ENCODE measurements at regions of chr17 and their contacts with region 1.

Region 1: DNA sequence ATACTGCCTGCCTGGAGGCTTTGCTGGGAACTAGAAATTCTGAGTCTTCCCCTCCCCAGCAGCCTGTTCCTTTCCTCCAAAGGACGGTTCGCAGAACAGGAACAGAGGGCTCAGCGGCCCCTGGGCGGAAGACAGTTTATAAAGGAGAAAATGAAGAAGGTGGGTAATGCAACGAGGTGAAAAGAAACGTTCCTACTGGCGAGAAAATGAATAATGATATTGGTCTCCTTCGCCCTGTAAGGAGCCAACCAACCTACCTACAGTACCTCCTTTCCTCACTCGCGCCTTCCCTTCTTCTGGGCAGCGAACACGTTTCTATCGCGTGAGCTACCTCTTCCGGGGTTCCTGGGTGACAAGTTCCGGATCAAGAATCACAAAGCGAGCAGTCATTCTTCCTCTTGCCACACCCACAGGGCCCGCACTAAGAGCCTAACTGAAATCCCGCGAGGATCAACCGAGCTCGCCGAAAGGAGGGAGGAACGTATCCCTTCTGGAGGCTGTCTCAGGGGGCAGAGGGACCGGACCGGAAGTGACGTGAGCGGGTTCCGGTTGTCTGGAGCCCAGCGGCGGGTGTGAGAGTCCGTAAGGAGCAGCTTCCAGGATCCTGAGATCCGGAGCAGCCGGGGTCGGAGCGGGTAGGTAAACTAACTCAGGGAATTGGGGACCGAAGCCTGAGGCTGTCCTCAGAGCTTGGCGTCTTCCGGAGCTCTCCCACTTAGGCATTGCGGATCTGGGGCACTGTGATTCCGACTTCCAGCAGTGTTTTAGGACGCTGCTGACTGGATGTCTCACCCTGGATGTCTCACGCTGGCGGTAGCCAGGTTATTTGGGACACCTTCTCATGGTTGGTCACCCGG is at the starts of genes PTRH2 and VMP1:
- DNase-seq: peak; percentile 92
- H3K4me3 Mint-ChIP-seq: peak within 1 kb of the TSS; percentile 98
- H3K27ac Mint-ChIP-seq: peak within 1 kb of the TSS; percentile 96
- H3K4me1 Mint-ChIP-seq: peaks cover 50% of the 10 kb centered on the region
- H3K27me3 Mint-ChIP-seq: no peaks in the 10 kb centered on the region
- total RNA-seq, gene PTRH2: 49.7 and 51.1 TPM in 2 replicates
- total RNA-seq, gene VMP1: 357 and 374 TPM in 2 replicates

Region 2: GRCh38 chr17:59155439-59156182 is 551.7 kb before region 1 on chr17 and contains the start of gene PRR11:
- intact Hi-C with region 1: loop called (anchors 5 kb)
- DNase-seq: peak; percentile 94
- H3K4me3 Mint-ChIP-seq: no peak within 1 kb of the TSS
- H3K27ac Mint-ChIP-seq: no peak within 1 kb of the TSS
- H3K4me1 Mint-ChIP-seq: peaks cover 63% of the 10 kb centered on the region
- H3K27me3 Mint-ChIP-seq: no peaks in the 10 kb centered on the region
- total RNA-seq, gene PRR11: 29.4 and 32.7 TPM in 2 replicates

Region 3: GRCh38 chr17:59565171-59565969 is 142.0 kb before region 1 on chr17 and contains the start of gene DHX40:
- intact Hi-C with region 1: loop called (anchors 1 kb)
- DNase-seq: peak; percentile 90
- H3K4me3 Mint-ChIP-seq: peak within 1 kb of the TSS; percentile 100
- H3K27ac Mint-ChIP-seq: peak within 1 kb of the TSS; percentile 100
- H3K4me1 Mint-ChIP-seq: peaks cover 24% of the 10 kb centered on the region
- H3K27me3 Mint-ChIP-seq: peaks cover 7% of the 10 kb centered on the region
- total RNA-seq, gene DHX40: 16.8 and 17.1 TPM in 2 replicates

Region 4: GRCh38 chr17:59753522-59754467 is 46.5 kb after region 1 on chr17:
- intact Hi-C with region 1: loop called (anchors 2 kb)
- DNase-seq: peak; percentile 26
- H3K4me3 Mint-ChIP-seq: peak overlapping the region; percentile 80
- H3K27ac Mint-ChIP-seq: peak overlapping the region; percentile 93
- H3K4me1 Mint-ChIP-seq: peaks cover 64% of the 10 kb centered on the region
- H3K27me3 Mint-ChIP-seq: no peaks in the 10 kb centered on the region

Region 5: GRCh38 chr17:59892924-59893676 is 185.8 kb after region 1 on chr17 and contains the starts of genes RPS6KB1 and TUBD1:
- intact Hi-C with region 1: loop called (anchors 1 kb)
- DNase-seq: peak; percentile 98
- H3K4me3 Mint-ChIP-seq: peak within 1 kb of the TSS; percentile 100
- H3K27ac Mint-ChIP-seq: peak within 1 kb of the TSS; percentile 99
- H3K4me1 Mint-ChIP-seq: peaks cover 58% of the 10 kb centered on the region
- H3K27me3 Mint-ChIP-seq: peaks cover 3% of the 10 kb centered on the region
- total RNA-seq, gene RPS6KB1: 67.6 and 82.7 TPM in 2 replicates
- total RNA-seq, gene TUBD1: 12.3 and 13.2 TPM in 2 replicates